Activated T-helper 1 cell treated with anti-CD3 and anti-CD28 coated beads, Interleukin-12 subunit alpha, Interleukin-12 subunit beta, Interleukin-2, Interleukin-4 antibody, amounts not matched to agents 30 ng/mL and 10 ng/mL and 1 ng/mL, durations not matched to agents 14 hours and 24 hours and 36 hours (primary cell): ENCODE measurements at regions of chr9 and their contacts with region 1.

Region 1: GRCh38 chr9:98255578-98256296 is at the start of gene TBC1D2:
- DNase-seq: peak; percentile 96
- H3K4me3 Mint-ChIP-seq: peak within 1 kb of the TSS; percentile 89
- H3K27ac Mint-ChIP-seq: peak within 1 kb of the TSS; percentile 94
- H3K4me1 Mint-ChIP-seq: peaks cover 27% of the 10 kb centered on the region
- H3K27me3 Mint-ChIP-seq: peaks cover 3% of the 10 kb centered on the region
- total RNA-seq, gene TBC1D2: 1.8 and 2.2 TPM in 2 replicates

Region 2: DNA sequence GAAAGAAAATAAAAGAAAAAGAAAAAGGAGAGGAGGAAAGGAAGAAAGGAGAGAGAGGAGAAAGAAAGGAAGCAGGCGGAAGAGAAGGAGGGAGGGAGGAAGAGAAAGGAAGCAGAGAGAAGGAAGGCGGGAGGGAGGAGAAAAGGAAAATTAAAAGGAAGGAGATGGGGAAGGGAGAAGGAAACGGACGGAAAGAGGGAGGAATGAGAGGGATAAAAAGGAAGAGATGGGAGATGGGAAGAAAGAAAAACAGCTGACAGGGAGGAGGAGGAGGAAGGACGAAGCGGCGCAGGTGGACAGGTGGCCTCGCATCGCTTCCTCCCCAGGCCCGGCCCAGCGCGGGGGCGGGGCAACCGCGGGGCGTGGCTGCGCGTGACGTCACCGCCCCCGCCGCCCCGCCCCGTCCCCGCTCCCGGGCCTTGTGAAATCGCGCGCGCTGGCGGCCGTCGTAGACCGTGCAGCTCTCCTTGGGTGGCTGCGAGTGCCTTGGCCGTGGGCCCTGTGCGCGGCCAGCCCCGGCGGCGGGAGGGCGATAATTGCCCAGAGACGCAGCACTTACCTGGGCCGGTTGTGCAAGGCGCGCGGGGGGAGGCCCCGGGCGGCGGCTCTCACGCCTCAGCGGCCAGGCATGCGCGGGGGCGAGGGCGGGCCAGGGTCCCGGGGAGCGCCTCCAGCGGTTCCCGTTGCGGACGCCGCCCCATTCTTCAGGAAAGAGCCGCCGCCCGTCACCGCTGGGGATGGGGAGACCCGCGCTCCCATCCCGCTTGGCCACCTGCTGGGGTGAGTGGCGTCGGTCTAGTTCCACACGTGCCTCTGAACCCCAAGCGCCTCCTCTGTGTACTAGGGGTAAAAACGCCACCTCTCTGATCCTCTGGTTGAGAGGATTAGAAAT is 452.3 kb before region 1 on chr9:
- intact Hi-C with region 1: loop called (anchors 10 kb)
- DNase-seq: peak; percentile 66
- H3K4me3 Mint-ChIP-seq: peak overlapping the region; percentile 79
- H3K27ac Mint-ChIP-seq: peak overlapping the region; percentile 67
- H3K4me1 Mint-ChIP-seq: peaks cover 17% of the 10 kb centered on the region
- H3K27me3 Mint-ChIP-seq: peaks cover 25% of the 10 kb centered on the region

Region 3: DNA sequence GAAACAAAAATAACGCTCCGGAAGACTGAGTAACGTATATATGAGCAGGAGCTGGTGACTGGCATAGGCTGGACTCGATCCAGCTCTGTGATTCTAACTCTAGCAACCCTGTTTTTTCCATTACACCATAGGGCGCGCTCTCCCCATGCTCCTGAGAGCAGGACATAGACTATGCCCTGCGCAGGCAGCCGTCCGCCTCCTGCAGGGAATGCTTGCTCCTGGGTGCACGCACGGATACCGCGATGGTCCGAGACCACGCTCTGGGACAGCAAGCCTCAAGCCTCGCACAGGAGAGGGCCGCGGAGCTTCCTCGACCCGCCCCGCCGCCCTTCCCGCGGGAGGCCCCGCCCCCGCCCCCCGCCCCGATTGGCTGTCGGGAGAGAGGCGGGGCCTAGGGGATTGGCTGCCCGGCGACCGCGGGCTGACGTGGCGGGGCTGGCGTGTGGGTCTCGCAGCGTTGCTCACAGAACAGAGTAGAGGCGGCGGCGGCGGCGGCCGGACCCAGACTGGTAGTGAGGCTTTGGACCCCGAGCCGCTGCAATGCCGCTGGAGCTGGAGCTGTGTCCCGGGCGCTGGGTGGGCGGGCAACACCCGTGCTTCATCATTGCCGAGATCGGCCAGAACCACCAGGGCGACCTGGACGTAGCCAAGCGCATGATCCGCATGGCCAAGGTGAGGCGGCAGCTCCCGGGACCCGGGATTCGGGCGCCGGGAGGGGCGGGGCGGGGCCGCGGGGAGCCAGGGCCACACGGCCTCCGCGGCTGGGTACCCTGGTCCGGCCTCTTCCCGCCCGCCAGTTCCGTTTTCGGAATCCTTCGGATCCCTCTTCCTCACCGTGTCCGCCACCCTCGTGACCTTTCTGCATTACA is 199.2 kb before region 1 on chr9 and contains the start of gene NANS:
- intact Hi-C with region 1: loop called (anchors 1 kb)
- DNase-seq: peak; percentile 90
- H3K4me3 Mint-ChIP-seq: peak within 1 kb of the TSS; percentile 98
- H3K27ac Mint-ChIP-seq: peak within 1 kb of the TSS; percentile 97
- H3K4me1 Mint-ChIP-seq: peaks cover 33% of the 10 kb centered on the region
- H3K27me3 Mint-ChIP-seq: no peaks in the 10 kb centered on the region
- total RNA-seq, gene NANS: 54.4 and 55.5 TPM in 2 replicates

Region 4: DNA sequence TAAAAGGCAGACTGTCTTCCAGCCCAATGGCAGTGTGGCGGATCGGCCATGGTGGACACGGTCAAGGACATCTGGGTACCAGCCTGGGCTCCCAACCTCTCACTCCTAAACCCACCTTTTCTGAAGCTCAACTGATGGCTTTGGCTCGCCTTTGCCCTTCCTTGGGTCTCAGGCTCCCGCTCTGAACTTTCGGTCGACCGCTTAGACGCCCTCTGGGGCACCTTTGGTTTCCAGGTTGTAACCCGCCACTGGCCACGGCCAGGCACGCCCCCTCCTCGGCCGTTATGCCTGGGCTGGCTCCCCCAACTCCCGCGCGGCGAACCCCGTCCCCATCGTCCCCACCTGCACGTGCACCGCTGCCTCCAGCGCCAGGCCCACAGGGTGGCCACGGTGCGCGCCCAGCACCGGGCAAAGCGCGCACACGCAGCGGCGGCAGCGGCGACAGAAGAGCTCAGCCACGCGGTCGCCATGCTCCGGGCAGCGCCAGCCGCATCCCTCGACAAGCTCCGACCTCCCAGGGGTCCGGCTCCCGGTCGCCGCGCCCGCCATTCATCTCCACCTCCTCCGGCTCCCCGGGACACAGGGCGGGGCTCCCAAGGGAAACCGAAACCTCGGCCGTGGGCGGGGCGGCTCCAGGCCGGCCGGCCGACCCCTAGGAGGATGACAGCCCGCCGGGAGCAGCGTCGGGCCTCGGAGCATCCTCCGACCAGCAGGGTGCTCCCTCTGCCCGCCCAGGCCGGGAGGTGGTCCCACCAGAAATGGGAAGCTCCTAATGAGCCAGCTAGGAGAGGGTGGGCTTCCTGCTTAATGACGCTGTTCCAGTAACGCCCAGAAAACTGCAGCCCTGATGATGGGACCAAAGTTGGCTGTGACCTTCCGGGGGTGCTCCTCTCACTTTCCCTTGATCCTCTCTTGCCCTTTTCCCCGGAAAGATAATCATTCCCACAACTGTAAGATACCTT is 136.8 kb before region 1 on chr9 and contains the start of gene TRIM14:
- intact Hi-C with region 1: loop called (anchors 2 kb)
- DNase-seq: peak; percentile 71
- H3K4me3 Mint-ChIP-seq: peak within 1 kb of the TSS; percentile 95
- H3K27ac Mint-ChIP-seq: peak within 1 kb of the TSS; percentile 98
- H3K4me1 Mint-ChIP-seq: peaks cover 42% of the 10 kb centered on the region
- H3K27me3 Mint-ChIP-seq: no peaks in the 10 kb centered on the region
- total RNA-seq, gene TRIM14: 41.7 and 42.0 TPM in 2 replicates

Region 5: DNA sequence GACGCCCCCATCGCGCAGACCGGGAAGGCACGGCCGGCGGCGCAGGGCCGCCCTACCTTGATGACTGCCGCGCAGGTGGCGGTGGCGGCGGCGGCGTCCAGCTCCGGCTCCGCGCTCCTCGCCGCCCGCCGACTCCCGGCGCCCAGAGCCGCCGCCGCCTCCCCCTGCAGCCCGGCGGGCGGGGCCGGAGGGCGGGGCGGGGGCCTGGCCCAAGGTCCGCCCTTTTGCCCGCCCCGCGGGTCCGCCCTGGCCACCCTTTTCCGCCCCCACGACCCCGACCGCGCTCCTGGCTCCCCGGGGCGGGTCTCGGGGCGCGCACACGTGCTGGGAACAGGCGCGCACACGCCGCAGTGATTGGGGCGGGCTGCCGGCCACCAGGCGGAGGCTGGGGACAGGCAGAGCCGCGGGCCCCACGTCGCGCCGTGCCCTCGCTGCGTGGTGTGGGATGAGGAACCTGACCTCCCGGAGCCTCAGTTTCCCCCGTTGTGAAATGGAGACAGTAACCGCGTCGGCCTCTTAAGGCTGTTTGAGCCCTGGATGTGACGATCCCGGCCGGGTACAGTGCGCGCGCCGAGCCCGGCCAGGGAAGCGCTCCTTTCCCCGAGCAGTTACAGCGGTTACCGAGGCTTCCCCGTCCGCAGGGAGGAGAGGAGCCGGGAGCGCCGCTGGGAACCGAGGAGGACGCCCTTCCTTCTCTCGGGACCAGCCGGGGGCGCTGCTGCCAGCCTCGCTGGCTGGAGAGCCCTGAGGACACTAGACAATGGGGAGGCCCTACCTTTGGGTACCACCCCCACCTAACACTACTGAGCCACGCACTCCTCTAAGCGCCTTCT is 63.0 kb before region 1 on chr9 and contains the start of gene CORO2A:
- intact Hi-C with region 1: loop called (anchors 1 kb)
- DNase-seq: peak; percentile 66
- H3K4me3 Mint-ChIP-seq: peak within 1 kb of the TSS; percentile 86
- H3K27ac Mint-ChIP-seq: peak within 1 kb of the TSS; percentile 6
- H3K4me1 Mint-ChIP-seq: peaks cover 16% of the 10 kb centered on the region
- H3K27me3 Mint-ChIP-seq: peaks cover 14% of the 10 kb centered on the region
- total RNA-seq, gene CORO2A: 1.3 TPM in 2 replicates